ENCODE measurements at regions of chr17 and their contacts with region 1.

Region 1: GRCh38 chr17:63434876-63435684 is 11.0 kb downstream of the CYB561 start:
- DNase-seq: peak; percentile 82
- H3K4me3 Mint-ChIP-seq: peak overlapping the region; percentile 44
- H3K27ac Mint-ChIP-seq: peak overlapping the region; percentile 84
- H3K4me1 Mint-ChIP-seq: peaks cover 68% of the 10 kb centered on the region
- H3K27me3 Mint-ChIP-seq: no peaks in the 10 kb centered on the region

Region 2: DNA sequence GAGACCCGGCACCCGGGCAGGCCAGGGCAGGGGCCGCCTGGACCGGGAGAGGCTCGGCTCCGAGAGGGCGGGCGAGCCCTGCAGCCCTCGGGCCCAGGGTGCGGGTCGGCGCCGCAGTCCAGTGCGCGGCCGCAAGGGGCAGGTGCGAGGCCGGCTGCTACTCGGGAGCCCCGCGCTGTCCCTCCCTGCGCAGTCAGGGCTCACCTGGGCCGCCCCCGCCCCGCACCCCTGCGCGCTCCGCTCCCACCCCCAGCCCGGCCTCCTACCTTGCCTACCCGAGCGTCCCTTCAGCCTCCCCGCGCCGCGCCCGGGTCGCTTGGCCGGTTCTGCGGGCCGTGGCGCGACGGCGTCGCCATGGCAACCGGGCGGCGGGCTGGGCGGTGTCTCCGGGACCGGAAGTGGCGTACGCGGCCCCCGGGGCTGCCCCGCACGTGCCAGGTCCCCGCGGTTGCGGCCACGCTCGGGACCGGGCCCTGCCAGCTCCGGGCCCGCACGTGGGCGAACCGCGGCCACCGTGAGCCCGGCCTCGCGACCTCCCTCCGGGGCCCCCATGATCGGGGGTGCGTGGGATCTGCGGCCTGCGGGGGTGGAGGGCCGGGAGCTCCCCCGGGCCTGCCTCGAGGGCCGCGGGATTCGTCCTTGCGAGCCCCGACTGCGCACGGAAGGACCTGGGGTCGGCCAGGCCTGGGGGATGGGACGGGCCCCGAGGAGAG is 11.1 kb after region 1 on chr17 and contains the start of gene CYB561:
- CTCF ChIA-PET with region 1: interaction called, 12 read pairs
- POLR2A ChIA-PET with region 1: interaction called, 30 read pairs
- DNase-seq: peak; percentile 74
- H3K4me3 Mint-ChIP-seq: peak within 1 kb of the TSS; percentile 64
- H3K27ac Mint-ChIP-seq: peak within 1 kb of the TSS; percentile 69
- H3K4me1 Mint-ChIP-seq: peaks cover 46% of the 10 kb centered on the region
- H3K27me3 Mint-ChIP-seq: peaks cover 3% of the 10 kb centered on the region
- total RNA-seq, gene CYB561: 28.9 to 30.3 TPM

Region 3: GRCh38 chr17:63478791-63479494 is 43.9 kb after region 1 on chr17:
- CTCF ChIA-PET with region 1: interaction called, 174 read pairs
- POLR2A ChIA-PET with region 1: interaction called, 9 read pairs
- DNase-seq: peak; percentile 84
- H3K4me3 Mint-ChIP-seq: peak overlapping the region; percentile 74
- H3K27ac Mint-ChIP-seq: no peak overlapping the region
- H3K4me1 Mint-ChIP-seq: peaks cover 16% of the 10 kb centered on the region
- H3K27me3 Mint-ChIP-seq: peaks cover 33% of the 10 kb centered on the region

Region 4: GRCh38 chr17:63842540-63843386 is 407.7 kb after region 1 on chr17 and contains the start of gene SMARCD2:
- CTCF ChIA-PET with region 1: no interaction called
- POLR2A ChIA-PET with region 1: no interaction called
- DNase-seq: peak; percentile 99
- H3K4me3 Mint-ChIP-seq: peak within 1 kb of the TSS; percentile 97
- H3K27ac Mint-ChIP-seq: peak within 1 kb of the TSS; percentile 96
- H3K4me1 Mint-ChIP-seq: peaks cover 46% of the 10 kb centered on the region
- H3K27me3 Mint-ChIP-seq: no peaks in the 10 kb centered on the region
- total RNA-seq, gene SMARCD2: 150 to 152 TPM